ENCODE measurements at regions of chr2 and their contacts with region 1.

Region 1: DNA sequence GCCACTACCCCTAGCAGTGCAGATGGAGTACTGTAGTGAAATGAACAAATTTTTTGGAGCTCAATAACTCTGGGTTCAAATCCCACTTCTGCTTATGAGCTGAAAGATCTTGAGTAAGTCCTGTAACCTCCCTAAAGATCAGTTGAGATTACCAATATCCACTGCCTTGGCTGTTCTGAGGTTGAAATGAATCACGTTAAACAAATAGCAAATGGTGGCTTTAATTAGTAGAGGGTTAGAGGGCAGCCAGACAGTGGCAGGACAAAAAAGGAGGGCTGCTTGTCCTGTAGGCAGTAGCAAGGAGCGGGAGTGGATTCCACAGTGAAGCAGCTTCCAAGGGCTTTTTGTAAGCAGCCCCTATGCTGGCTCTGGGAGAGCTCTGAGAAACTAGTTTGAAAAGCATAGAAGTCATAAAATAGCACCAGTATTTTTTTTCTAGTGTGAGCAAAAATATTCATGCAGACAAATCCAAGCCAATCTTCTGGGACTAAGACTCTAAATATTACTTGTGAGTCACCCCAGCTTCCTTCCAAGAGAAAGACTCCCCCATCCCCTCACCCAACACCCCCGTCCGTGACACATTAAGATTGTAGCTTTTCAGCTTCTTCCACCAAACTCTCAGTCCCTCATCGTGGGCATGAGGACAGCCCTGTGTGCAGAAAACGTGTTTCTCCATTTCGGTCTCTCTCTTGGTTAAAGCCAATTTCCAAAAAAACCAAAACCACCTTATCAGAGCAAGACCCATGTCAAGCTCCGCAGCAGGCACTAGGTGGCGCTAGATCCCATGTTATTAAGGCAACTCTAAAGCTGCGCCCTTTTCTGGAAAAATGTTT is 123.5 kb upstream of the LGALSL start:
- DNase-seq: peak; percentile 61 to 86 (median 64)
- ATAC-seq: peak; percentile 91
- H3K4me3 ChIP-seq: no peak overlapping the region
- H3K27ac ChIP-seq: no peak overlapping the region
- H3K4me1 ChIP-seq: no peaks in the 10 kb centered on the region
- H3K27me3 ChIP-seq: peaks cover 19 to 43% of the 10 kb centered on the region in 2 experiments
- CTCF ChIP-seq: peak; percentile 80 to 93 (median 88)
- EP300 ChIP-seq: no peak
- POLR2A ChIP-seq: no peak
- RAD21 ChIP-seq: peak; percentile 92 to 96

Region 2: DNA sequence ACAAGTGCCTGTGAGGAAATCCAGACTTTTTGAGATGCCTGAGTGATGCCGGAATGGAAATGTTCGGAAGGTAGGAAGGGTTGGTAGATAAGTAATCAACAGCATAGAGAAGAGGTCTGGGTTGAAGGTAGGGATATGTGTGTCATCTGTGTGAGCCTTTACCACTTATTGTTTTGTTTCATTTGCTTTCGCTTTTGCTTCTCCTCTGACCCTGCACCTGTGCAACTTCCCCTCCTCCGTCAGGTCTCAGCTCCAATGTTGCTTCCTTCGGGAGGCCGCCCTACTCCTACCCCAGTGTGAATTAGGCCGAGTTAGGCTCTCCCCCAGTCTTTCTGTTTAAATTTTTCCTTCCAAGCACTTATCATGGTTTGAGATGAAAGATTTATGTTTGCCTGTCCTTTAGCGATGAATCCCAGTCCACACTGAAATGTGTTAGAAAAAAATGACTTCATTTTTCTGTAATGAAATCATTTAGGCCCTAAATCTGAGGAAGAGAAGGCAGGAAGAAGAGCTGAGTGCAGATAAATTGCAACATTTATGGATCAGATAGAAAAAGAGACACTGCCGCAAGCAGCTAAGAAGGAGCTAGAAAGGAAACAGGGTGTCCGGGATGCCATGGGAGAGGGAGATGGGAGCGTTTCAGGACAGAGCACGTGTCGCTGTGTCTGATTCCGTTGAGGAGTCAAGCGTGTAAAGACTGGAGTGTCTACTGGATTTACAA is 46.7 kb before region 1 on chr2:
- CTCF ChIA-PET with region 1: no interaction called
- POLR2A ChIA-PET with region 1: no interaction called
- in situ Hi-C with region 1: no loop called
- intact Hi-C with region 1: no loop called
- DNase-seq: no peak
- ATAC-seq: peak; percentile 28; the same call in 2 of the 3 replicates
- H3K4me3 ChIP-seq: no peak overlapping the region
- H3K27ac ChIP-seq: no peak overlapping the region
- H3K4me1 ChIP-seq: peaks cover 0 to 3% of the 10 kb centered on the region in 2 experiments; a peak in 1 of 5 replicates
- H3K27me3 ChIP-seq: peaks cover 20 to 30% of the 10 kb centered on the region in 2 experiments
- CTCF ChIP-seq: no peak
- EP300 ChIP-seq: no peak
- POLR2A ChIP-seq: no peak
- RAD21 ChIP-seq: no peak

Region 3: DNA sequence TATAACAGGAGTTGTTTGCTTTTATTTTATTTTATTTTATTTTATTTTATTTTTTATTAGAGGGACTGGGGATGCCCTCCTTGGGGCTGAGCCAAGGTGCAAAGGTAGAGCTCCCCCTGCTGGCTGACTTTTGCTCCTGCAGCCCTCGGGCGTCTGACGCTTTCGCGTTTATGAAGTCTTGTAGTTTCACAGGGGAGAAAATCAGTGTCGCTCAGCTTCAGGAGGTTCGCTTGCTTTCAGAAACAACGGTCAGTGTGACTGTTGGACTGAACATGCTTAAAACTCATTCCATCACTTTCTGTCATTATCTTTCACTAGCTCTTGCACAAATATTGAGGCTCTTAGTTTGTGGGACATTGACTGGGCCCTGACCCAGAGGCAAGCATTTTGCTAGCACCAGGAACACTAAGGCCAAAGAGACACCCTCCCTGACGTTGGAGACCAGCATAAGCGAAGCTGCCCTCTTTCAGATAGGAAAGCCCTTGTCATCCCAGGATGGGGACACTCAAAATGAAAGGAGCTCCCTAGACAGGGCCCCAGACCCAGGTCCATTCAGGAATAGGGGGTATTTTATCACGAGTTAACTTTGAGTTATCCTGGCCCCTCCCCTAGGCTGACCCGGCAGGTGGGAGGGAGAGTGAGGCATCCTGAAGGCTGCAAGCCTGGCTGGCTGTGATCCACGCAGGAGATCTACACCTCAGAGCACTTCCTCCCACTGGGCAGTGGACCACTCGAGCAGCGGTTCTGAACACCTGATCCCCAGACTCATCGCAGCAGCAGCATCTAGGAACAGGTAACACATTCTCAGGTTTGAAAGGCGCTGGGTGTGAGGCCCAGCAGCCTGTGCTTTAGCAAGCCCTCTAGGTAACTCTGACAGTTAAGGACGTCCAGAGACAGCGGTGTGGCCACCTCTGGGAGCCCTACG is 157.8 kb after region 1 on chr2:
- CTCF ChIA-PET with region 1: interaction called, 23 read pairs
- POLR2A ChIA-PET with region 1: interaction called, 6 read pairs
- in situ Hi-C with region 1: loop called (anchors 5 kb)
- intact Hi-C with region 1: loop called (anchors 1 kb)
- DNase-seq: peak; percentile 68 to 79 (median 78)
- ATAC-seq: peak; percentile 92
- H3K4me3 ChIP-seq: no peak overlapping the region
- H3K27ac ChIP-seq: no peak overlapping the region
- H3K4me1 ChIP-seq: no peaks in the 10 kb centered on the region
- H3K27me3 ChIP-seq: peaks cover 15 to 36% of the 10 kb centered on the region in 2 experiments
- CTCF ChIP-seq: peak; percentile 80 to 91 (median 86)
- EP300 ChIP-seq: no peak
- POLR2A ChIP-seq: no peak
- RAD21 ChIP-seq: peak; percentile 77 to 92

Region 4: GRCh38 chr2:64574871-64575270 is 244.4 kb after region 1 on chr2:
- CTCF ChIA-PET with region 1: no interaction called
- POLR2A ChIA-PET with region 1: no interaction called
- in situ Hi-C with region 1: loop called (anchors 10 kb)
- intact Hi-C with region 1: no loop called
- DNase-seq: no peak
- ATAC-seq: no peak
- H3K4me3 ChIP-seq: no peak overlapping the region
- H3K27ac ChIP-seq: no peak overlapping the region
- H3K4me1 ChIP-seq: no peaks in the 10 kb centered on the region
- H3K27me3 ChIP-seq: no peaks in the 10 kb centered on the region
- CTCF ChIP-seq: no peak
- EP300 ChIP-seq: no peak
- POLR2A ChIP-seq: no peak
- RAD21 ChIP-seq: no peak

Region 5: DNA sequence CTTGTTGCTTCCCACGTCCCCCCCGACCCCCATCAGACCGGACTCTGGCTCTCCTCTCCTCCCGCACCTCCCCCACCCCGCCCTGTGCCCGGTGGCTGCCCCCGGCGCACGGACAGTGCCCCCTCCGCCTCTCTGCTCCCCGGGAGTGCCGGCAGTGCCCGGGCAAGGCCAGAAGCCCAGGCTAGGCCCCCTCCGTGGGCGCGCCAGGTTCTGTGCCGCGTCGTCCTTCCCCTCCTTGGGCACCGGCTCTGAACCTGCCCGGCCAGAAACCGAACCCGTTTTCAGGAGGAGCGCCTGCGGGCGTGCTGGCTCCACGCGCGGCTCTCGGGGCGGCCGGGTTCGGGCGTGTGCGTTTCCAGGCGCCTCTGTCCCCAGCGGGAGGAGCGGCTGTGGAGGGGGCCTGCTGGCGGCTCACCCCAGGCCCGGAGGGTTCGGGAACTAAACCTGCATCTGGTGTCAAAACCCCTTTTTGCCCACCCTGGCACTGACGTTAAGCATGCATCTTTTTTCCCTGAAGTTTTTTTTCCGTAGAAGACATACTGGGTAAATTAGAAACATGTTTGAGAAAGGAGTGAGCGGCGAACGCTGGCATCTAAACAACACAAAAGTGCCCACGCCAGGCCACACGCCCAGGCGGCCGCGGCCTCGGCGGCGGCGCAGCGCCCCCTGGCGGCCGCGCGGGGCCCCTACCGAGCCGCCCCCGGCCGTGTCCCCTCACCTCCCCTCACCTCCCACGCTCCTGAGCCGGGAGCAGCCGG is 534.8 kb after region 1 on chr2:
- CTCF ChIA-PET with region 1: interaction called, 3 read pairs
- POLR2A ChIA-PET with region 1: no interaction called
- in situ Hi-C with region 1: loop called (anchors 10 kb)
- intact Hi-C with region 1: loop called (anchors 5 kb)
- DNase-seq: peak; percentile 60 to 90 (median 86)
- ATAC-seq: peak; percentile 92
- H3K4me3 ChIP-seq: peak overlapping the region; percentile 14; the same call in 1 of the 2 replicates
- H3K27ac ChIP-seq: no peak overlapping the region
- H3K4me1 ChIP-seq: peaks cover 18 to 24% of the 10 kb centered on the region in 2 experiments
- H3K27me3 ChIP-seq: no peaks in the 10 kb centered on the region
- CTCF ChIP-seq: peak; percentile 56 to 66 (median 66); a peak in 5 of 6 replicates
- EP300 ChIP-seq: no peak
- POLR2A ChIP-seq: no peak
- RAD21 ChIP-seq: peak; percentile 78 to 97